Thyroid gland (tissue), 4 donors: ENCODE measurements at regions of chr3 and their contacts with region 1.

Region 1: GRCh38 chr3:14203521-14204079 is 25.0 kb downstream of the LSM3 start:
- DNase-seq: peak; percentile 74 to 79
- H3K4me3 ChIP-seq: no peak overlapping the region
- H3K27ac ChIP-seq: peak overlapping the region; percentile 79 to 83 (median 81)
- H3K4me1 ChIP-seq: peaks cover 18 to 54% of the 10 kb centered on the region in 2 donors
- H3K27me3 ChIP-seq: no peaks in the 10 kb centered on the region
- CTCF ChIP-seq: peak; percentile 75 to 96 (median 84)
- POLR2A ChIP-seq: no peak

Region 2: DNA sequence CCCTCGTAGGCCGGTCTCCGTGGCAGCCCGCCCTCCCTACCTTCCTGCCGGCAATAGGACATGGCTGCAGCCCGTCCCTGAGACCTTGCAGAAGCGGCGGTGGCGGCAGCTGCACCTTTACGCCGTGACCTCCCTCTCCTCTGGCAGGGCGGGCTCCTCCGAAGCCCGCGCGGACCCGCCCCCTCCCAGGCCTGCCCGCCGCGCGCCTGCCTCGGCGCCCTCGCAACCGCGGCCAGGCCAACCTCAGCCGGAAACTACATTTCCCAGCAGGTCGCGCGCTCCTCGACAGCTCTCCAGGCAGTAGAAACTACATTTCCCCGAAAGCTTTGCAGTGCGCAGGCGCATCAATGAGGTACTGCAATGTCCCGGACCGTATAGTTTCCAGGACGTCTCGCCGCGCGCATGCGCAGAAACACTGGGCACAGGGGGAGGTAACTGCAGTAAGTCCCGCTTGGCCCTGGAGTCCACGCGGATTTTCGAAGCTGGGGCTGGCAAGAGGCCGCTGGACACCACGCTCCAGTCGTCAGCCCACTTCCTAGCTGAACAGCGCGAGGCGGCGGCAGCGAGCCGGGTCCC is 78.9 kb before region 1 on chr3 and contains the starts of genes CHCHD4 and TMEM43:
- intact Hi-C with region 1: no loop called
- DNase-seq: peak; percentile 99 to 100
- H3K4me3 ChIP-seq: peak within 1 kb of the TSS; percentile 81 to 99 (median 82)
- H3K27ac ChIP-seq: peak within 1 kb of the TSS; percentile 78 to 95 (median 94)
- H3K4me1 ChIP-seq: peaks cover 26 to 27% of the 10 kb centered on the region in 2 donors
- H3K27me3 ChIP-seq: no peaks in the 10 kb centered on the region
- CTCF ChIP-seq: peak in 1 of 6 experiments; percentile 9
- POLR2A ChIP-seq: peak; percentile 30 to 86
- total RNA-seq, gene CHCHD4: 15.1 to 20.2 (median 16.0) TPM
- total RNA-seq, gene TMEM43: 69.6 to 109 (median 90.3) TPM

Region 3: DNA sequence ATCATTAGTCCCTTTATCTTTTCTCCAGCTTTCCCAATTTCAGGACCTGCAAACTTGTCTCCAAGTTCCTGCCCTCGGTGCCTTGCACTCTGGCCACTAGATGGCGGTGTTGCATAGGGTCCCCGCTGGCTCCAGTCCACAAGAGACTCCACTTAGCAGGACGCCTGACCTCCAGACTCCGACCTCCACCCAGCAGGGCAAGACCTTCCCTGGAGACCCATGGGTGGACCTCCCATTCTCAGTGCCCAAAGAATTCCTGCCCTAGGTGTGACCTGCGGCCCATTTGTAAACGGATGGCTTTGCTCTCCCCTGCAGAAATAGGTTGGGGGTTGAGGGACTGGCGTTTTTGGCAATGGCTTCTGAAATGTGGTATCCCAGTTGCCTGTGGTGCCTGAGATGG is 57.6 kb after region 1 on chr3:
- intact Hi-C with region 1: loop called (anchors 5 kb)
- DNase-seq: peak; percentile 83 to 87
- H3K4me3 ChIP-seq: no peak overlapping the region
- H3K27ac ChIP-seq: no peak overlapping the region
- H3K4me1 ChIP-seq: peaks cover 0 to 11% of the 10 kb centered on the region in 2 donors
- H3K27me3 ChIP-seq: no peaks in the 10 kb centered on the region
- CTCF ChIP-seq: peak; percentile 88 to 97 (median 96)
- POLR2A ChIP-seq: no peak

Region 4: DNA sequence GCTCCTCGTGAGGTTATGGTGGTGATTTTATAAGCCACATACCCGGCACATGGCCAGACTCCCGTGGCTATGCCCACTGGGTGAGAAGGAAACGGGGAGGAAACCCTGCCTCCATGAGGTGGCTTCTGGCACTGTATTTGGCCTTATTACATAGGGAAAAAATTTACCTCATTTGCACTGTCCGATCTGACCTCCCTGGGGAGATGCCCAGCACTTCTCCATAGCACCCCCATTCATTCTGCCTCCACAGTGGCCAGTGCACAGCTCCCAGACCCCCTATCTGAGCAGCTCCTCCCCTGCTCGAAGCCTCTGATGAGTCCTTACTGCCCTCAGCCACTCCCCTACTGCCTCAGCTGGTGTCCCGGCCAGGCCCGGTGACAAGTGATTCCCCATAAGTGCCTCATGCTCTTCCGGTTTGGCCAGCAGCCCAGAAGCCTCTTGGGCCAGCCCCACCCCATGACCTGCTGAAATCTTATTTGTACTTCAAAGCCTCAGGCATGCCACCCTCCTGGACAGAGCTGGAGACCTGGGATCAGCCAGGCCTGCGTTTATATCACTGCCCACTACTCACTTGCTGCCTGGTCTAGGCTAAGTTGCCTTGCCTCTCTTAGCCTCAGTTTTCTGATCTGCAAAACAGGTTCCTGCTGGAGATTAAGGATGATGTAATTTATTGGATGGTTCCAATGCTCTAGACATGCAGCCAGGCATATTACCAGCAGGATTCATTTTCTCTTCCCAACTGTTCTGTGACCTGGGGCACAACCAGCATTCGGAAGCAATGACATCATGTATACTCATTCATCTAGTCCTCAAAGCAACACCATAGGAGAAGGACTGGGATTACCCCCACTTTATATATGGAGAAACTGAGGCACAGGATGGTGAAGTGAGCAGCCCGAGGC is 168.2 kb after region 1 on chr3:
- intact Hi-C with region 1: loop called (anchors 10 kb)
- DNase-seq: peak; percentile 96 to 97
- H3K4me3 ChIP-seq: no peak overlapping the region
- H3K27ac ChIP-seq: peak overlapping the region; percentile 47 to 82 (median 73)
- H3K4me1 ChIP-seq: peaks cover 17 to 57% of the 10 kb centered on the region in 2 donors
- H3K27me3 ChIP-seq: no peaks in the 10 kb centered on the region
- CTCF ChIP-seq: peak in 1 of 6 experiments; percentile 5
- POLR2A ChIP-seq: peak in 1 of 2 donors; percentile 23

Region 5: GRCh38 chr3:14467814-14468620 is 264.4 kb after region 1 on chr3:
- intact Hi-C with region 1: loop called (anchors 2 kb)
- DNase-seq: peak; percentile 34
- H3K4me3 ChIP-seq: no peak overlapping the region
- H3K27ac ChIP-seq: no peak overlapping the region
- H3K4me1 ChIP-seq: peaks cover 16 to 28% of the 10 kb centered on the region in 2 donors
- H3K27me3 ChIP-seq: no peaks in the 10 kb centered on the region
- CTCF ChIP-seq: peak; percentile 75 to 89 (median 84)
- POLR2A ChIP-seq: no peak

Region 6: DNA sequence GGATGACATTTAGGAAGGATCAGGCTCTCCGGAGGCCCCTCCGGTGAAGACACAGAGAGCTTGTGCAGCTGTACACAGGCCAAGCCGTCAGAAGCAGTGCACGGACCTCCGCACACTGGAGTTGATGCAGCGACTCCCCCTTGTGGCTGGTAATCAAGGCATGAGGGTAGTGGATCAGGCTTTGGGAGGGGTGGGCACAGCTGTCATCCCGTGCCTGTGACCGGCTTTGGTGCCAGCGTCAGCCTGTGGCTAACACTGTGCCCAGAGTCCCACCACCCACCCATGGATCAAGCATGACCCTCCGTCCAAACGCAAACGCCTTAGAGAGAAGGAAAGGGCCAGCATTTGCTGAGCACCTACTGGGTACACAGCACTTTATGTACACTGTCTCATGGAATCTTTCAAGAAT is 344.7 kb after region 1 on chr3:
- intact Hi-C with region 1: loop called (anchors 5 kb)
- DNase-seq: peak; percentile 61 to 65
- H3K4me3 ChIP-seq: no peak overlapping the region
- H3K27ac ChIP-seq: no peak overlapping the region
- H3K4me1 ChIP-seq: peaks cover 0 to 5% of the 10 kb centered on the region in 2 donors
- H3K27me3 ChIP-seq: no peaks in the 10 kb centered on the region
- CTCF ChIP-seq: peak; percentile 21 to 63 (median 52)
- POLR2A ChIP-seq: no peak